Dorsolateral prefrontal cortex (tissue), 120 donors: ENCODE measurements at regions of chr6 and their contacts with region 1.

Region 1: GRCh38 chr6:16238057-16238962 is at the start of gene GMPR:
- DNase-seq: peak in 7 of 10 donors; percentile 27 to 75 (median 47)
- H3K4me3 ChIP-seq: peak within 1 kb of the TSS; percentile 49 to 84 (median 69)
- H3K27ac ChIP-seq: peak within 1 kb of the TSS in 33 of 59 donors; percentile 4 to 82 (median 51)
- H3K27me3 ChIP-seq: no peaks in the 10 kb centered on the region
- CTCF ChIP-seq: peak in 2 of 56 donors; percentile 2 to 11
- total RNA-seq, gene GMPR: 4.8 to 47.1 (median 16.9) TPM

Region 2: GRCh38 chr6:16319813-16320532 is 81.7 kb after region 1 on chr6:
- intact Hi-C with region 1: loop called in 1 of 2 experiments (anchors 5 kb)
- DNase-seq: peak in 9 of 10 donors; percentile 66 to 86 (median 77)
- H3K4me3 ChIP-seq: peak overlapping the region in 58 of 59 donors; percentile 10 to 62 (median 39)
- H3K27ac ChIP-seq: peak overlapping the region; percentile 14 to 98 (median 91)
- H3K27me3 ChIP-seq: no peaks in the 10 kb centered on the region
- CTCF ChIP-seq: peak in 12 of 56 donors; percentile 6 to 32 (median 13)